ENCODE measurements at regions of chr16 and their contacts with region 1.

Region 1: GRCh38 chr16:589658-590159 is at the start of gene RAB40C:
- DNase-seq: peak; percentile 98 to 100 (median 100)

Region 2: DNA sequence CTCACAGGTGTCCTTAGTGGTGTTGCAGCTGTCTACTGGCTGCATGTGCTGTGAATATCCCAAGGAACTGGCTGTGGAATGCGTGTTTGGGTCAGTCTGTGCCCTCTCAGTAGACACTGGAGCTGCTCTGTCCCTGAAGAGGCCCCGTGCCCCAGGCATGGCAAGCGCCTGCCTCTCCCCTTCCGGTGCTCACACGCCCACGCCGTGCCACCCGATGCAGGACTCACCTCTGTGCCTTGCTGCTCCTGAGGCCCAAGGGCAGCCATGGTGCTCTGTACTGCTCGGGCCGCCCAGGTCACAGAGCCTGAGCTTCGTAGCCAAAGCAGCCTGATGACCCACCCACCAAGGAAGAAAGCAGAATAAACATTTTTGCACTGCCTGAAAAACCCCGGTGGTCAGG is 324.0 kb before region 1 on chr16:
- intact Hi-C with region 1: no loop called
- DNase-seq: no peak

Region 3: GRCh38 chr16:483341-484075 is 106.2 kb before region 1 on chr16:
- intact Hi-C with region 1: no loop called
- DNase-seq: peak in 6 of 10 donors; percentile 37 to 91 (median 53)

Region 4: GRCh38 chr16:527006-527753 is 62.5 kb before region 1 on chr16 and contains the start of gene CAPN15:
- intact Hi-C with region 1: loop called (anchors 10 kb)
- DNase-seq: peak; percentile 68 to 98 (median 82)

Region 5: DNA sequence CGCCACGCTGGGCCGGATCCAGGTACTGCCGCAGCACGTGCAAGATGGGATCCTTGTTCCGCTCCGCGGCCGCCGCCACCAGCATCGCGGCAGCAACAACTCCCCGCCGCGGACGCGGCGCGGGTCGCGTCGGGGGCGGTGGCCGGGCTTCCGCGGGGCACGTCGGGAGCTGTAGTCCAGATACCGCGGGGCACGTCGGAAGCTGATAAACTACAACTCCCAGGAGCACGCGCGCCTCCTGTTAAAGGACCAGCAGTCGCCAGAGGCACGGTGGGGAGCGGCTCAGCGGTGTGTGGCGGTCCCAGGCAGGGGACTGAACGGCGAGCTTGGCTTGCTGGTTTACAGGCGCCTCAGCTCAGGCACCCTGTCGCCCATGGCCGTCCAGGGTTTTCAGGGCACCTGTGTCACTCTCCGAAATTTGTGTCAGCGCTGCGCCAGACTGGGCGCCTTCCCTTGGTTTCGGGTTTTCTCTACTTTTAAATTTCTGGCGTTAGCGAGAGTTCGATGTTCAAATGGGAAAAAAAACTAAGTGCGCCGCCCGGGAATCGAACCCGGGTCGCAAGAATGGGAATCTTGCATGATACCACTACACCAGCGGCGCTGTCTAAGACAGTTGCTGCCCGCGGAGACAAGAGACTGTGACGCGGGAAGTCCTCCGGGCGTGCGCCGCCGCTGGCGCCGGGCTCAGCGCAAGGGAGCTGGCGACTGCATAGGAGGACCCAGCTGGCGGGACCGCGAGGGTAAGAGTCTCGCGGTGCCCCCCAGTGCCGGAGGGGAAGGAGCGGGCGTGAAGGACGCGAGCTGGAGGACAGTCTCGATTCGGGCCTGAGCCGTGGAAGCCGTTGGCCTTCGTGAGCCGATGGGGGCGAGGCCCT is 46.7 kb after region 1 on chr16 and contains the start of gene METTL26:
- intact Hi-C with region 1: loop called (anchors 2 kb)
- DNase-seq: peak; percentile 91 to 99 (median 97)